ENCODE measurements at regions of chr17 and their contacts with region 1.

Region 1: DNA sequence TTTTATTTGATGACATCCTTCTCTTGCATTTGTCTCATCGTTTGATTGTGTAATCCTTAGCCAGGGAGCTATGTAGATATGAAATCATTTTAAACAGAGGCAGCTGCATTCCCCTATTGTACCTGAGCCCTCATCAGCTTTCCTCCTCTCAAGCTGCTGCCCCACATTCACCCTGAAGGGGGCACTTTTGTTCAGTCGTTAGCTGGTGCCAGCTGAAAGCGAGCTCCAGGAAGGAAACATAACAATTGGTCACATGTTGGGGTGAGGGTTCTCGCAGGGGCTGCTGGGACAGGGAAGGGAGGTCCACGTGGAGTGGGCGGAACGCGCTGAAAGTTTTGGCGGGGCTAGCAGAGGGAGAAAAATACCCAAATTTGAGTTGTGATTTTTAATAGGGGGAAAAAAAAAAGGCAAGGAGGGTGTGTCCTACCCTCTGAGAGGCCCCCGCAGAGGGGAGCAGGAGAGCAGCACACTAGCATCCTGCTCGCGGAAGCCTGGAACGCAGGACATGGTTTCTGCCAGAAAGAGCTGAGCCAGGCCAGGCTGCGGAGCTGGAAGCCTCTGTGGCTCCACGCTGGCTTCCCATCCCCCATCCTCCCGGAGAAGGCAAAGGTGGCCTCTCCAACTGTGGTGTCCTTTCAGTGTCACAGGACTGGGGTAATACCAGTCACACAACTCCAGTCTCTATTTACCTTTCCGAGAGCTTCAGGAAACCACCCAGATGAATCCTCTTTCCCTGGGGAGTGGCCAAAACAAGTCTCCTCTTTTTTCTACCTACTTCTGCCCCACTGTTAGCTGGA is 8.5 kb upstream of the MSL1 start:
- DNase-seq: peak; percentile 78
- H3K4me3 ChIP-seq: peak overlapping the region; percentile 25
- H3K27me3 ChIP-seq: no peaks in the 10 kb centered on the region
- CTCF ChIP-seq: peak; percentile 82; the same call in 1 of the 2 replicates

Region 2: GRCh38 chr17:40021451-40021971 is 91.8 kb before region 1 on chr17:
- CTCF ChIA-PET with region 1: interaction called, 76 read pairs
- POLR2A ChIA-PET with region 1: no interaction called
- DNase-seq: peak; percentile 62
- H3K4me3 ChIP-seq: no peak overlapping the region
- H3K27me3 ChIP-seq: no peaks in the 10 kb centered on the region
- CTCF ChIP-seq: no peak

Region 3: GRCh38 chr17:40038882-40039513 is 74.3 kb before region 1 on chr17:
- CTCF ChIA-PET with region 1: interaction called, 16 read pairs
- POLR2A ChIA-PET with region 1: no interaction called
- DNase-seq: peak; percentile 69
- H3K4me3 ChIP-seq: no peak overlapping the region
- H3K27me3 ChIP-seq: no peaks in the 10 kb centered on the region
- CTCF ChIP-seq: peak; percentile 91

Region 4: DNA sequence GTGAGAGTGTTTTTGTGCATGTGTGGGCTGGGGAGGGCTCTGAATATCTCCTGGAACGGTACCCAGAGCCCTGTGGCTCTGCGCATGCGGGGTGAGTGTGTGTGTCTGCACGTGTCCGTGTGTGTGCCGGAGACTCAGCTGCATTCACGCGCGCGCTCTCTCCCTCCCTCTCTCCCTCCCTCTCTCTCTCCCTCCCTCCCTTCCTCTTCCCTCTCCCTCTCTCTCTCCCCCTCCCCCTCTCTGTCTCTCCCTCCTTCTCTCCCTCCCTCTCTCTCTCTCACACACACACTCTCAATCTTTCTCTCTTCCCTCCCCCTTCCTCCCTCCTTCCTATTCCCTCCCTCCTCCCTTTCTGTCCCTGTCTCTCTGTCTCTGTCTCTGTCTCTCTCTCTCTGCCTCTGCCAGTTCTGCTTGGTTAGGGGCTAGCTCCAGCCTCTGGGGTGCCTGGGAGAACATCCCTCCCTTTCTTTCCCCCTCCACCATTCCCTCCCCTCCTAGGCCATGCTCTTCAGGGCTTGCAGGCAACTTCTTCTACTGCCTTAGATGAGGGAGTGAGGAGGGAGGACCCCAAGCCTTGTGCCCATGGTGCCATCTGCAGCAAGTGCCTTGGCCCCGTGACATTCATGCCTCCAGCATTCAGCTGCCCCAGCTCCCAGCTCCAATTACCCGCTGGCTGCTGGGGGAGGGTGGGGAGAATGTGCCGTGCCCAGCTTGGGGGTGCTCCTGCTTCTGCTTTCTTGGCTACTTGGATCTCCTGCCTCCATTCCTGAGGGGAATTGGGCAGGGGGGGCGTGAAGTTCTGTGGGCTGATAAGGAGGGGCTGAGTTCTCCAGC is 44.2 kb before region 1 on chr17:
- CTCF ChIA-PET with region 1: interaction called, 83 read pairs
- POLR2A ChIA-PET with region 1: interaction called, 7 read pairs
- DNase-seq: peak; percentile 61
- H3K4me3 ChIP-seq: peak overlapping the region; percentile 15
- H3K27me3 ChIP-seq: no peaks in the 10 kb centered on the region
- CTCF ChIP-seq: no peak

Region 5: GRCh38 chr17:40092581-40092980 is 20.7 kb before region 1 on chr17:
- CTCF ChIA-PET with region 1: interaction called, 84 read pairs
- POLR2A ChIA-PET with region 1: no interaction called
- DNase-seq: no peak
- H3K4me3 ChIP-seq: no peak overlapping the region
- H3K27me3 ChIP-seq: no peaks in the 10 kb centered on the region
- CTCF ChIP-seq: no peak

Region 6: GRCh38 chr17:40139566-40140058 is 26.3 kb after region 1 on chr17:
- CTCF ChIA-PET with region 1: interaction called, 14 read pairs
- POLR2A ChIA-PET with region 1: no interaction called
- DNase-seq: no peak
- H3K4me3 ChIP-seq: peak overlapping the region; percentile 50
- H3K27me3 ChIP-seq: no peaks in the 10 kb centered on the region
- CTCF ChIP-seq: no peak

Region 7: DNA sequence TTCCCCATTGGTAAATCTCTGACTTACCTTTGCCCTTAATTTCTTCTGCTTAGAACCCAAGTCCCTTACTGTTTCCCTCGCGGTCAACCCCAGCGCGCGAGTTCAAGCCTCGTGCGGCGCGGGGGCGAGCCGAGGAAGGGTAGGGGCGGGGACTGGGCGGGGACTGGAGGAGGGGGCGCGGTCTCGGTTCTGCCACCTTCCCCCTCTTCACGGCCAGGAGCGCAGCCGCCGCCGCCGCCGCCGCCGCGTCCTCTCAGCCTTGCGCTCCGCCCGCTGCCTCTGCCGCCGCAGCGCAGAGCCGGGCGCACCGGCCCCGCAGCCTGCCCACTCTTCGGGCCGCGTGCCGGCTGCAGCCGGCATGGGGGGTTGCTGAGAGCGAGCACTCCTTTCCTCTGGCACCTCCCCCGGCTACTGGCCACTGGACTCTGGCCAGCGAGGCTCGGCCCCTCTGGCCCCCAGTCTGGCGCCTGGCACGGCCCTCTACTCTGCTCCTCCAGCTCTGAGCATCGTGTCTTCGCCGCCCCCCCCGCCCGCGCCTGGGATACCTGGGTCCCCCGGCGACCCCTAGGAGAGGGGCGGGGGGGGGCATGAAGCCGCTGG is 64.1 kb after region 1 on chr17 and contains the start of gene RAPGEFL1:
- CTCF ChIA-PET with region 1: interaction called, 16 read pairs
- POLR2A ChIA-PET with region 1: no interaction called
- DNase-seq: no peak
- H3K4me3 ChIP-seq: peak within 1 kb of the TSS; percentile 45
- H3K27me3 ChIP-seq: no peaks in the 10 kb centered on the region
- CTCF ChIP-seq: no peak
- polyA plus RNA-seq, gene RAPGEFL1: 2.3 and 3.8 TPM in 2 replicates

Region 8: GRCh38 chr17:40547785-40548478 is 434.6 kb after region 1 on chr17:
- CTCF ChIA-PET with region 1: no interaction called
- POLR2A ChIA-PET with region 1: no interaction called
- DNase-seq: no peak
- H3K4me3 ChIP-seq: no peak overlapping the region
- H3K27me3 ChIP-seq: no peaks in the 10 kb centered on the region
- CTCF ChIP-seq: no peak

Measured in BJ (cell line).